Posterior cingulate gyrus (tissue), 11 donors: ENCODE measurements at regions of chr1 and their contacts with region 1.

Region 1: DNA sequence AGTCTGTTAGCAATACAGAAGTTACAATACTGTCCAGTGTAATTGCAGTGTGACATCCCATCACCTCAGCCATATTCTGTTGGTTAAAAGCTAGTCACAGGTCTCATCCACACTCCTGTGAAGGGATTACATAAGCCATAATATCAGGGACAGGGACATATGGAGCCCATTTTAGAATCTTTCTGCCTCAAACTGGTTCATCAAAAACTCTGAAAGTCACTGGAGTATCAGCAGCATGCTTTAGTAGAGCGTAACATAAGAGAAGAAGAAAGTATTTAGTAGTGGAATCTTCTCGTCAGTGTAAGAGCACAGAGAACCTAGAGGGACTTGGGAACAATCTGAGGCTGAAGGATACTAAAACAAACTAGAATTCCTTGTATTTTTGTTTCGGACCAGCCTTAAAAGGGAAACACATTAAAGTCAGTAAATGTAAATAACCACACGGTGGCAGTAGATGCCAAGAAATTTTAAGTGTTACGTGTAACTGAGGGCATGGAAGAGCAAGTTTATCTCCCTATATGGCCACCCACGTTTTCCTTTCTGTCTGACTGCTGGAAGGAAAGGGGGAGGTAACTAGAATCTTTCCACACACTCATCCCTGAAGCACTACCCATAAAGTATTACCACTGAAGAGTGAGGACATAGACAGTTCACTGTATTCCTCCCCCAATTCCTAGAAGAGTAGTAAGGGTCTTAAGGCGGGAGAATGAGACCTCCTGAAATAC is 41.6 kb upstream of the AGL start:
- DNase-seq: no peak

Region 2: GRCh38 chr1:99784143-99784542 is 24.4 kb before region 1 on chr1:
- intact Hi-C with region 1: no loop called
- DNase-seq: no peak

Region 3: DNA sequence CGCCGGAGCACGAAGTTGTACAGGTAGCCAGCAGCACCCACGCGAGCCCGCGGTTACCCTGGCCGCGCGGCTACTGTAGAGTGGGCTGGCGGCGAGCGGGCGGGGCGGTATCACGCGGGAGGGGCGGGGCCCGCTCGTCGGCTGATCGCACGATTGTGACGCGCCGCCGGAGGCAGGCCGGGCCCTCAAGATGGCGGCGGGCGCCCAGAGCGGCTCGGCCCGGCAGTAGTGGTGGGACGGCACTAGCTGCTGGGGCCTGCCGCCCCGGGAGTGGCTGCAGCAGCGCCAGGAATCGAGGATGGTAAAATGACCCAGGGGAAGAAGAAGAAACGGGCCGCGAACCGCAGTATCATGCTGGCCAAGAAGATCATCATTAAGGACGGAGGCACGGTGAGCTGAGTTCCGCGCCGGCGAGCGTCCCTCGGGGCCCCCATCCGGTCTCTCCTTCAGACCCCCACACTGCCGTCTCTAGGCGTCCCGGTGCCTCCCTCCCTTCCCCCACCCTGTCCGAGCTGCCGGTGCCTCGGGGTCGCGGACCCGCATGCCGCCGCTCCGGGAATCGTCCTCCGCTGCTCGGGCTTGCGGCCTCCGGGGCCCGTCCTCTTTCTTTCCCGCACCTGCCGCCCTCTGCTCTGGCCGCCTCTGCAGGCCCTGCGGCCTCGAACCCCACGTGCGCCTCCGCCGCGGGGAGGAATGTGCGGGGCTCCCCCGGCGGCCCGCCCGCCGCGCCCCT is 229.5 kb after region 1 on chr1:
- intact Hi-C with region 1: loop called (anchors 5 kb)
- DNase-seq: peak; percentile 80 to 99 (median 90)

Region 4: DNA sequence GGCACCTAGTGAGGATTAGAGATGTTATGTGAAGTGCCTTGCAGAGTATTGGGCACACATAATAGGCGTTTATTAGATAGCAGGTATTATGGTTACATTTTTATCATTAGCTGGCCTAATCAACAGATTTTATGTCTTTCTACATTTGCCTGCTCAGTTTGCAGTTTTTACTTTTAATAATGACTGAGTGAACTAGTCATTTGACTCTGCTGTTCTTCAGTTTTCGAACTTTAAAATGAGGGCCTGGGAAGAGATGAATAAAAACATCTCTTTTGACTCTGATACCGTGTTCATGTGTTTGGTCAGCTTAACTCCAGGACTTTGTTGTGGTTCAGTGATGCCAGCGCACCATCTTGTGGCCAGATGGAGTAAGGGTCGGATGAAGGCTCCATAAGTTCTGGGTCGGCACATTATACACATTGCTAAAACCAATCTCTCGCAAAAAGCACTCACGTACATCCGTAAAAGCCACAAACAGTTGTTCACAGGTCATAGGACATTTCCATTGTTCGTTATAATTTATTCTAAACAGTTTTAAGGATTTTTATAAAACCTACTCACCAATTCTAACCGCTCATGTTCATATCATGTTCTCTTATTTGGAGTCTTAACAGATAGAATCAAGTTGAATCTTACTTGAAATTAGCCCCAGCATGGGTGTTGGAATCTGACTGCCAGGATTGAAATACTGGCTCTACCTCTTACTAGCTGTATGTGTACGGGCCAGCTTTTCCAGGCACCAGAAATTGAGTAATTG is 651.0 kb after region 1 on chr1:
- intact Hi-C with region 1: loop called (anchors 1 kb)
- DNase-seq: peak; percentile 45 to 94 (median 74)

Region 5: DNA sequence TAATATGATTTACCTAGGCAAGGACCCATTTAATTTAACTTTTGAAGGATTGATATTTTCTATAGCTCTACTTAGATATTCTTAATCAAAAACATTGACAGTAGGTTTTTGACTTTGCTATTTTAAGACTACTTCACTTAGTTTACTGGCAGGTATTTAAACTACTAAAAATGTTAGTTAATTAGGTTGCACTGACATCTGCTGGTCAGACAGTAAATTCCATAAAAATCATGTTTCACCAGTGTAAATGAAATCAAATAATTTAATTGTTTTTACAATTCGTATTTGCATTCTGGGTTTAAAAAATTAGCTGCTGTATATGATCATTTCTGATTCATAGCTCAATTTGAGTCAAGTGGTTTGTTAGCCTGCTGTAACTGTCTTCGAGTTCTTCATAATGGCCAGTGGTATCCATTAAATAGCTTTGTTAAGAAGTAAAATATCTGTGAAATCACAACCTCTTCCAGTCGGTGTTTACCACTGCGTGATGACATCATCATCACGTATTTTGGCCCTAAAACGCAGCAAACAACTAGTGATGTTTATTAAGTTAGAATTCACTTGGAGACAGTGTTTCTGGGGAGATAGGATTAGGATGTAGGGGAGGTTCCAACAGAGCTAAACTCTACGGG is 1059.9 kb after region 1 on chr1:
- intact Hi-C with region 1: loop called (anchors 2 kb)
- DNase-seq: no peak